ENCODE measurements at regions of chr22 and their contacts with region 1.

Region 1: DNA sequence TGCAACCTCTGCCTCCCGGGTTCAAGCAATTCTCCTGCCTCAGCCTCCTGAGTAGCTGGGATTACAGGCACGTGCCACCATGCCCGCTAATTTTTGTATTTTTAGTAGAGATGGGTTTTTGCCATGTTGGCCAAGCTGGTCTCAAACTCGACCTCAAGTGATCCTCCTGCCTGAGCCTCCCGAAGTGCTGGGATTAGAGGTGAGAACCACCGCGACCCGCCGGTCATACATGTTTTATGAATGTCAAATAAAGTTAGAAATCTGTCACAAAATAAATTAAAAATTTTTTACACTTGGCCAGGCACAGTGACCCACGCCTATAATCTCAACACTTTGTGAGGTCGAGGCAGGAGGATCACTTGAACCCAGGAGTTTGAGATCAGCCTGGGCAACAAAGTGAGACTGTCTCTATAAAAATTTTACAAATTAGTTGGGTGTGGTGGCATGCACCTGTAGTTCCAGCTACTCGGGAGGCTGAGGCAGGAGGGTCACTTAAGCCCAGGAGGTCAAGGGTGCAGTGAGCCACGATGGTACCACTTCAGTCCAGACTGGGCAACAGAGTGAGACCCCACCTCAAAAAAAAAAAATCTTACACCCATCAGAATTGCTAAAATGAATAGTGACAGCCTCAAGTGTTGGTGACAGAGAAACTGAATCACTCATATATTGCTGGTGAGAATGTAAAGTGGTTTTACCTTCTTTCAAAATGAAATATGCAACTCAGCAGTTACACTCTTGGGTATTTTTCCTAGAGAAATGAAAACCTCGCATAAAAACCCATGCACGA is 55.2 kb downstream of the MED15 start:
- DNase-seq: no peak
- ATAC-seq: no peak
- H3K4me3 ChIP-seq: no peak overlapping the region
- H3K4me3 Mint-ChIP-seq: no peak overlapping the region
- H3K27ac ChIP-seq: no peak overlapping the region
- H3K27ac Mint-ChIP-seq: peak overlapping the region; percentile 93
- H3K4me1 ChIP-seq: peaks cover 64% of the 10 kb centered on the region
- H3K4me1 Mint-ChIP-seq: peaks cover 74% of the 10 kb centered on the region
- H3K27me3 ChIP-seq: no peaks in the 10 kb centered on the region
- H3K27me3 Mint-ChIP-seq: no peaks in the 10 kb centered on the region
- CTCF ChIP-seq: no peak

Region 2: GRCh38 chr22:20402960-20403778 is 159.5 kb before region 1 on chr22:
- CTCF ChIA-PET with region 1: no interaction called
- POLR2A ChIA-PET with region 1: no interaction called
- intact Hi-C with region 1: no loop called
- DNase-seq: peak in 1 of 14 experiments; percentile 48
- ATAC-seq: no peak
- H3K4me3 ChIP-seq: no peak overlapping the region
- H3K4me3 Mint-ChIP-seq: no peak overlapping the region
- H3K27ac ChIP-seq: no peak overlapping the region
- H3K27ac Mint-ChIP-seq: no peak overlapping the region
- H3K4me1 ChIP-seq: peaks cover 8% of the 10 kb centered on the region
- H3K4me1 Mint-ChIP-seq: peaks cover 16% of the 10 kb centered on the region
- H3K27me3 ChIP-seq: no peaks in the 10 kb centered on the region
- H3K27me3 Mint-ChIP-seq: no peaks in the 10 kb centered on the region
- CTCF ChIP-seq: no peak

Region 3: DNA sequence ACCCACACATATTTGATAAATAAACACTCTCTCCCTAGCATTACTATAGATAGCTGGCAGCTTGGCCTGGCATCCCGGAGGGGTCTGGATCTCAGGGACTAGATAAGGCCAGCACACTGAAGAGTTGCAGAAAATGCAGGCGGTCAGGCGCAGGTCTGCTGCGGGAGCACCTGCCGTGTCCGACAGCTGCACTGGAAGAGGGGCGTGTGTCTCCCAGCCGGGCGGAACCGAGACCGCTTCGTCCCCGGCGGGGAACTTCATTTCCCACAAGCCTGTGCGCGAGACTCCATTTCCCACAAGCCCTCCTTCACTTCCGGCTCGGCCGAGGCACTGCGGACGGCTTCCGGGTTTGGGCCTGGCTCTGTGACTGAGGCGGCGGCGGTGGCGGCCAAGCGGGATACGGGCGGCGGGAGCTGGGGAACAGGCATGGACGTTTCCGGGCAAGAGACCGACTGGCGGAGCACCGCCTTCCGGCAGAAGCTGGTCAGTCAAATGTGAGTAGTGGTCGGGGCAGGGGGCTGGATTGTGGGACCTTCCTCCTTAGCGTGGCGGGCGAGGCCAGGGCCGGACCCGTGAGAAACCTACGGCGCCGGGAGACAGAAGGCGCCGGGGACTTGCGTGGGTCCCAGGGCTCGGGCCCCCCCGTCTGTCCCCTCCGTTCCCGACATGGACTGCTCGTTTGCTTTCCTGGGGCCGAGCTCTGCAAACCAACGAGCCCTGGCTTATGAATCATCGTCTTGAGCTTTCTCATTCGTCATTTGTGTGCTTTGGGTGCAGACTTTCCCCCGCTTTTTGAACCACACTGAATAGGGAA is 55.2 kb before region 1 on chr22 and contains the start of gene MED15:
- CTCF ChIA-PET with region 1: interaction called, 11 read pairs
- POLR2A ChIA-PET with region 1: interaction called, 60 read pairs
- intact Hi-C with region 1: loop called in 1 of 2 experiments (anchors 2 kb)
- DNase-seq: peak; percentile 77 to 93 (median 84)
- ATAC-seq: peak; percentile 83
- H3K4me3 ChIP-seq: peak within 1 kb of the TSS; percentile 100
- H3K4me3 Mint-ChIP-seq: peak within 1 kb of the TSS; percentile 98
- H3K27ac ChIP-seq: peak within 1 kb of the TSS; percentile 88 to 90
- H3K27ac Mint-ChIP-seq: peak within 1 kb of the TSS; percentile 94
- H3K4me1 ChIP-seq: peaks cover 42% of the 10 kb centered on the region
- H3K4me1 Mint-ChIP-seq: peaks cover 51% of the 10 kb centered on the region
- H3K27me3 ChIP-seq: no peaks in the 10 kb centered on the region
- H3K27me3 Mint-ChIP-seq: no peaks in the 10 kb centered on the region
- CTCF ChIP-seq: no peak
- total RNA-seq, gene MED15: 181 to 191 TPM

Region 4: DNA sequence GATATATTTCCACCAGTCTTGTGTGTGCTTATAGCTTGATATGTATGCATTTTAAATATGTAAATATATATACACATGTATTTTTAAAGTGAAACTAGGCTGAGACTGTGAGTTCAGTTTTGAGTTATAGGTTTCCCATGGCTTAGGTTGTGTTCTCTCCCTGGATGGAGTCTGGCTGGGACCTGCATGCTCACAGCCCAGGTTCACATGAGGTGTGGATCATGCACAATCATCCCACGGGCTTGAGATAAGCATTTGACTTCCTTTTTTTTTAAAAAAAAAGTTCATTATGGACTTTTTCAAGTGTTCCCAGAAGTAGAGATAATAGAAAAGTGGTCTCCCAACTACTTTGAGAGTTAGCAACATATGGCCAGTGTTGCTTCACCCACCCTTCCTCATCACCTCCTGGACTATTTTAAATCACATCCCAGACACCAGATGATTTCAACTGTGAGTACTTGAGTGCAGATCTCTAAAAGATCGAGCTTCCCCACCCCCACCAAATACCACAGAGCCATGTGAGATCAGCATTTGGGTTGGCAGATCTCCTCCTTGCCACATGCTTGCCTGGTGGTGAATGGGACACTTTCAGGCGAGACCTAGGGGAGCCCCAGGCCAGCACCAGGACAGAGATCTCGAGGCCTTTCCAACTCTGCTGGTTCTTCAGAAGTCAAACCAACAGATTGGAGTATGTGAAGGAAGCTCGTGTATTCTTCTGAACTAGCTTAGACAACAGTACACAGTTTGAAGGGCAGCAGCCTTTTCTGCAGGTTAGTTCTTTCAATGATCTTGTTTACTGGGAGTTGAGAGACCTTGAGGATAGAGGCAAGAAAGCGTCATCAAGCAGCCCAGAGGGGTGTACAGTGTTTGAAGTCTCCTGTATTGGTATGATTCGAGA is 39.3 kb before region 1 on chr22:
- CTCF ChIA-PET with region 1: interaction called, 20 read pairs
- POLR2A ChIA-PET with region 1: interaction called, 17 read pairs
- intact Hi-C with region 1: loop called in 1 of 2 experiments (anchors 5 kb)
- DNase-seq: peak in 5 of 14 experiments; percentile 27 to 56 (median 49)
- ATAC-seq: peak; percentile 61
- H3K4me3 ChIP-seq: no peak overlapping the region
- H3K4me3 Mint-ChIP-seq: peak overlapping the region; percentile 68
- H3K27ac ChIP-seq: peak overlapping the region; percentile 37 to 42
- H3K27ac Mint-ChIP-seq: peak overlapping the region; percentile 74
- H3K4me1 ChIP-seq: peaks cover 59% of the 10 kb centered on the region
- H3K4me1 Mint-ChIP-seq: peaks cover 72% of the 10 kb centered on the region
- H3K27me3 ChIP-seq: no peaks in the 10 kb centered on the region
- H3K27me3 Mint-ChIP-seq: no peaks in the 10 kb centered on the region
- CTCF ChIP-seq: no peak

Region 5: DNA sequence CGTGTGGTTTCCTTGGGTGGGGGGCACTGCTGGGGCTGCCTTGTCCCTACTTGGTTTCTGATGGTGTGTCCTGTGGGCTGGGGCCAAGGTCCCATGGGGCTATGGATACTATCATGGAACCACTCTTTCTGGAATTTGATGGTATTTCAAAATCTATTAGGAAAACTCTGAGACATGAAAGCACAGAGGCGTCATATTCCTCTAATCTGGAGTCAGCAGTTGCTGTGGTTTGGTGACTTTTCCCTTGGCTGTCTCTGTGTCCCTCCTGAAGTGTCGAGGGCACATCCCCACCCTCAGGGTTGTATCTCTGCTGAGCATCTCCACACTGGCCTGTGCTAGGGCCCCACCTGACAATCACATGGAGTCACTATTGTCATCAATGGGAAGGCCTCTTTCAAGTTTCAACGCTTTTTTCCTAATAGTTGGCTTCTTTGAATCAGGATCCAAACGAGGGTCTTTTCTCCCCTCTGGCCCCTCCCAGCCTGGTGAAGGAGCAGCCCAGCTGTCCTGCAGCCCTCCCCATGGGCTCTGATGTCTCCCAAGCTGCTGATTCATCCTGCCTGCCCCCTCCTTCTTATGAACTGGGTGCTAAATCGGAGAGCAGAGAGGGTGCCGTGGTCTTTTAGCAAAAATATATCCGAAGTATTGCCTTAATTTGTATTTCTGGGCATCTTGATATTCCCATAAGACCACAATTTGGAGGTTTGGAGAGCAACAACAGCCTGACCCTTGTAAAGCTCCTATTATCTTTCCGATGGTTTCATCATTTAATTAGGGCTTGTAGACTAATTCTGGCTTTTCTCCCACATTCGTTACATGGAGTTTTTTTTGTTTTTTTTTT is 16.8 kb before region 1 on chr22:
- CTCF ChIA-PET with region 1: interaction called, 107 read pairs
- POLR2A ChIA-PET with region 1: interaction called, 343 read pairs
- intact Hi-C with region 1: loop called in 1 of 2 experiments (anchors 1 kb)
- DNase-seq: no peak
- ATAC-seq: no peak
- H3K4me3 ChIP-seq: no peak overlapping the region
- H3K4me3 Mint-ChIP-seq: no peak overlapping the region
- H3K27ac ChIP-seq: peak overlapping the region; percentile 29 to 31
- H3K27ac Mint-ChIP-seq: peak overlapping the region; percentile 91
- H3K4me1 ChIP-seq: peaks cover 70% of the 10 kb centered on the region
- H3K4me1 Mint-ChIP-seq: peaks cover 77% of the 10 kb centered on the region
- H3K27me3 ChIP-seq: no peaks in the 10 kb centered on the region
- H3K27me3 Mint-ChIP-seq: no peaks in the 10 kb centered on the region
- CTCF ChIP-seq: no peak

Region 6: GRCh38 chr22:20606041-20606783 is 43.6 kb after region 1 on chr22:
- CTCF ChIA-PET with region 1: interaction called, 5 read pairs
- POLR2A ChIA-PET with region 1: interaction called, 5 read pairs
- intact Hi-C with region 1: loop called (anchors 1 to 5 kb)
- DNase-seq: peak; percentile 52 to 87 (median 66)
- ATAC-seq: peak; percentile 97
- H3K4me3 ChIP-seq: no peak overlapping the region
- H3K4me3 Mint-ChIP-seq: no peak overlapping the region
- H3K27ac ChIP-seq: no peak overlapping the region
- H3K27ac Mint-ChIP-seq: peak overlapping the region; percentile 59
- H3K4me1 ChIP-seq: peaks cover 15% of the 10 kb centered on the region
- H3K4me1 Mint-ChIP-seq: peaks cover 10% of the 10 kb centered on the region
- H3K27me3 ChIP-seq: no peaks in the 10 kb centered on the region
- H3K27me3 Mint-ChIP-seq: no peaks in the 10 kb centered on the region
- CTCF ChIP-seq: peak; percentile 75